PC-3 (cell line): ENCODE measurements at regions of chr7 and their contacts with region 1.

Region 1: DNA sequence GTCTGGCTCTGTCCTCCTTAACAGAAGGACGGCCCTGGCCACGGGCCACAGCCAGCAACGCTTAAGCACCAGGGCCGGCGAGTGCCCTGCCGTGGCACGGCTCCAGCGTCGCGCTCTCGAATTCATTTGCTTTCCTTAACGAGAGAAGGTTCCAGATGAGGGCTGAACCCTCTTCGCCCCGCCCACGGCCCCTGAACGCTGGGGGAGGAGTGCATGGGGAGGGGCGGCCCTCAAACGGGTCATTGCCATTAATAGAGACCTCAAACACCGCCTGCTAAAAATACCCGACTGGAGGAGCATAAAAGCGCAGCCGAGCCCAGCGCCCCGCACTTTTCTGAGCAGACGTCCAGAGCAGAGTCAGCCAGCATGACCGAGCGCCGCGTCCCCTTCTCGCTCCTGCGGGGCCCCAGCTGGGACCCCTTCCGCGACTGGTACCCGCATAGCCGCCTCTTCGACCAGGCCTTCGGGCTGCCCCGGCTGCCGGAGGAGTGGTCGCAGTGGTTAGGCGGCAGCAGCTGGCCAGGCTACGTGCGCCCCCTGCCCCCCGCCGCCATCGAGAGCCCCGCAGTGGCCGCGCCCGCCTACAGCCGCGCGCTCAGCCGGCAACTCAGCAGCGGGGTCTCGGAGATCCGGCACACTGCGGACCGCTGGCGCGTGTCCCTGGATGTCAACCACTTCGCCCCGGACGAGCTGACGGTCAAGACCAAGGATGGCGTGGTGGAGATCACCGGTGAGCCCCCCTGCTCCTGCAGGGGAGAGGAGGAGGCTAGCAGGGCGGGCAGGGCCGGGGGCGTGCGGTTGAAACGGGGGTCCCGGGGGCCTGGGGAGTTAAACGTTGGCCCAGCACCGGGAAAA is at the start of gene HSPB1:
- DNase-seq: peak; percentile 87
- ATAC-seq: peak; percentile 52
- H3K4me3 ChIP-seq: peak within 1 kb of the TSS; percentile 84
- H3K27ac ChIP-seq: peak within 1 kb of the TSS; percentile 51
- H3K4me1 ChIP-seq: peaks cover 22% of the 10 kb centered on the region
- H3K27me3 ChIP-seq: no peaks in the 10 kb centered on the region
- CTCF ChIP-seq: no peak
- total RNA-seq, gene HSPB1: 166 and 189 TPM in 2 replicates

Region 2: DNA sequence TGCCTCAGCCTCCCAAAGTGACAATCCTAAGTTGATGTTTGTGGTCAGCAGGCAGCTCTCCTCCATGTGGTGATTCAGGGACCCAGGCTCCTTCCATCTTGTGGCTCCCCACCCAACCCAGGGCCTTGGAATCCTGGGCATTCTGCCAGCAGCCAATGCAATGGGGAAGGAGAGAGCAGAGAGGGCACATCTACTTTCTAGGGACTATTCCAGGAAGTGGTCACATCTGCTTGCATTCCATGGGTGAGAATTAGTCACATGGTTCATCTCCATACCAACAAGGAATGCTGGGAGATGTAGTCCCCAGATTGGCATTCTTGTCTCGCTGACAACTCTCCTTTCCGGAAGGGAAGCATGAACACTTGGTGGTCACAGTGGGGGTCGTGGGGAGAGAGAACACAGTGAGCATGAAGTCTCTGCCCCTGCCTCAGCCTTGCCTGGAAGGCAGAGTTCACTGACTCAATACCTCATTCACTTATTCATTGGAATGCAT is 110.7 kb before region 1 on chr7:
- CTCF ChIA-PET with region 1: no interaction called
- POLR2A ChIA-PET with region 1: no interaction called
- intact Hi-C with region 1: no loop called
- DNase-seq: peak; percentile 53
- ATAC-seq: peak; percentile 62; the same call in 1 of the 2 replicates
- H3K4me3 ChIP-seq: no peak overlapping the region
- H3K27ac ChIP-seq: no peak overlapping the region
- H3K4me1 ChIP-seq: no peaks in the 10 kb centered on the region
- H3K27me3 ChIP-seq: no peaks in the 10 kb centered on the region
- CTCF ChIP-seq: no peak

Region 3: GRCh38 chr7:76340617-76341131 is 38.1 kb after region 1 on chr7:
- CTCF ChIA-PET with region 1: no interaction called
- POLR2A ChIA-PET with region 1: interaction called, 19 read pairs
- intact Hi-C with region 1: no loop called
- DNase-seq: no peak
- ATAC-seq: peak; percentile 21
- H3K4me3 ChIP-seq: no peak overlapping the region
- H3K27ac ChIP-seq: peak overlapping the region; percentile 14; the same call in 1 of the 2 replicates
- H3K4me1 ChIP-seq: peaks cover 20% of the 10 kb centered on the region
- H3K27me3 ChIP-seq: no peaks in the 10 kb centered on the region
- CTCF ChIP-seq: no peak